ENCODE measurements at regions of chr18 and their contacts with region 1.

Region 1: DNA sequence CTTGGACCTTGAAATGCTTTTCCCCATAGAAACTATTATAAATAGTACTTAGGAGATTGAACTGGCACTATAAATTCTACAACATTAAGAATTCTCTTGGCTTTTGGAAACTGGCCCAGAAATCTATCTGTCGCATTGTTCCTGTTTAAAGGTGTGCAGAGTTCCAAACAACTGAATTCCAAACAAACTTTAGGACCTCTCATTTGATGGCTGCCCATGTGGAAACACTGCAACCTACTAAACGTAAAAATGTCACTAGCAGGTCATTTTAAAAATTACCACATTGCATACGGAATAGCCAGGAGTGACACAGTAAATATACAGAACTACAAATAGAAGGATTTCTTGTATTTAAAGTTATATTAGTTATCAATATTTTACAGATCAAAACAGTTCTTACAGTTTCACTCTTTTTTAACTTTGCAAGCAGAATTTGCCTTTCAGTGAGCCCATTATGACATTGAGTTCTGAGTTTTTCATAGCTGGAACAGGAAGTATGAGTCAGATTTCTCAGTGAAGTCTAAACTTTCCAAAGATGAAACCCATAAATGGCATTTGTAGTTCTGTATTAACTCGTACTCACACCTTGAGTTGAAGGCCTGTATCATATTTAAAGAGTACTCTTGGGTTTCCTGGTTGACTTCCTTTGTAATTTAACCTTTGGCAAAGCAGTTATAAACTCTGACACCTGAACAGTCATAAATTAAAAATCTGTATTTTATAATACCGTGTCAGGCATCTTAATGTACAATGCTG is 142.3 kb upstream of the BOD1L2 start:
- DNase-seq: no peak
- H3K4me3 Mint-ChIP-seq: no peak overlapping the region
- H3K27ac Mint-ChIP-seq: peak overlapping the region; percentile 57
- H3K4me1 Mint-ChIP-seq: peaks cover 46% of the 10 kb centered on the region
- H3K27me3 Mint-ChIP-seq: no peaks in the 10 kb centered on the region

Region 2: DNA sequence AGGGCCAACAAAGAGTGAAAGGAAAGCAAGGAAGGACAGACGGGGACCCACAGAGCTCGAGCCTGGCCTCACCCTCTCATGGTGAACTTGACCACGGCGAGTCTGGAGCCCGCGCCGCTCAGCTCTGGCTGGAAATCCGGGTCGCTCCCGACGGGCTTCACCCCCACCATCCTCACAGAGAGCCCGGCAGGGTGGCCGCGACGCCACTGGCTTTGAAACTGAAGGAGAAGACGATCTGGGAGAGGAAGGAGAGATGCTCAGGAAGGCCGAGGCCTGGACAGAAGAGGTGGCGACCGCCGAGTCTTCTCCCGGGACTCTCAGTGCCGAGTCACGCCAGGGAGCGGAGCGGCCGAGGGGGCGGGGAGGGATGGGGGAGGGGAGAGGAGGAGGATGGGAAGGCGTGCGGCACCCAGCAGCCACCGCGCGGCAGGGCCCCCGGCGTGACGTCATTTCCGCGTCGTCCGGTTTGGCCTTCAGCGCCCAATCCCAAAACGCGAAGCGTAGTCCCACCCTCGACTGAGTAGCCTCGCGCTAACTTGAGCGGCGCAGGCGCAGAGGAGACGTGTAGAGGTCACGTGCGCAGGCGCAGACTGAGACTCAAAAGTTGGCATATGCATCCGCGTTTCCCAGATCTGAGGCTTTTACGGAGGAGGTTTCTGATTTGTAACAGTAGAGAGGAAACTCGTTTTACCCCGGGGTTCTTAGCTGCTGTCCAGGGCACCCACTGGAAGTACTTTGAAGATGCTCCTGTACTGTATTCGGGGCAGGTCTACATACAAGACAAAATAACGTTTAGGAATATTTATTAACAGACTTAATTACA is 366.1 kb before region 1 on chr18 and contains the start of gene TXNL1:
- intact Hi-C with region 1: loop called (anchors 5 kb)
- DNase-seq: peak; percentile 98
- H3K4me3 Mint-ChIP-seq: peak within 1 kb of the TSS; percentile 99
- H3K27ac Mint-ChIP-seq: peak within 1 kb of the TSS; percentile 97
- H3K4me1 Mint-ChIP-seq: peaks cover 55% of the 10 kb centered on the region
- H3K27me3 Mint-ChIP-seq: no peaks in the 10 kb centered on the region
- total RNA-seq, gene TXNL1: 94.2 and 100 TPM in 2 replicates

Region 3: DNA sequence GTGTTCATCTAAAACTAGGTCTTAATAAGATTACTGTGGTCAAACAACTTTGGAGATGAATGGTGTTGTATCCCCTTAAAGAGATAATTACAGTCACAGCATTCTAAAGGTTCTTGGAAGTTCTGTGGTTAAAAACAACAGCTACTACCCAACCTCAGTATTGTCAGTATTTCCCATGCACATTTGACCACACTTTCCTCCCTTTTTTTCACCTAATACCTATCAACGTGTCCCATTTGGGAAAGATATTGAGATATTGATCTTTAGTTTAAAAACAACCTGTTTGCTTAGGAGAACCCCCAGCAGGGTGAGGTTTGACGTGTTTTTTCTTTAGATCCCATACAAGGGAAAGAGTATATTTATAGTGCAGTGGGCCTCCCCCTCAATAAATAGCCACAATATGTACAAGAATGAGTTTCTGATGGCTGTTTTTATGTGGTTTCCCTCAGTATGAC is 287.8 kb before region 1 on chr18:
- intact Hi-C with region 1: loop called (anchors 5 kb)
- DNase-seq: no peak
- H3K4me3 Mint-ChIP-seq: no peak overlapping the region
- H3K27ac Mint-ChIP-seq: peak overlapping the region; percentile 66
- H3K4me1 Mint-ChIP-seq: peaks cover 35% of the 10 kb centered on the region
- H3K27me3 Mint-ChIP-seq: no peaks in the 10 kb centered on the region

Region 4: GRCh38 chr18:56929886-56930285 is 74.7 kb before region 1 on chr18:
- intact Hi-C with region 1: loop called (anchors 5 kb)
- DNase-seq: no peak
- H3K4me3 Mint-ChIP-seq: no peak overlapping the region
- H3K27ac Mint-ChIP-seq: no peak overlapping the region
- H3K4me1 Mint-ChIP-seq: peaks cover 5% of the 10 kb centered on the region
- H3K27me3 Mint-ChIP-seq: no peaks in the 10 kb centered on the region

Region 5: GRCh38 chr18:56992777-56993176 is 11.8 kb before region 1 on chr18:
- intact Hi-C with region 1: loop called (anchors 1 kb)
- DNase-seq: no peak
- H3K4me3 Mint-ChIP-seq: no peak overlapping the region
- H3K27ac Mint-ChIP-seq: no peak overlapping the region
- H3K4me1 Mint-ChIP-seq: peaks cover 12% of the 10 kb centered on the region
- H3K27me3 Mint-ChIP-seq: no peaks in the 10 kb centered on the region

Region 6: GRCh38 chr18:57015451-57015850 is 10.9 kb after region 1 on chr18:
- intact Hi-C with region 1: loop called (anchors 1 kb)
- DNase-seq: no peak
- H3K4me3 Mint-ChIP-seq: no peak overlapping the region
- H3K27ac Mint-ChIP-seq: no peak overlapping the region
- H3K4me1 Mint-ChIP-seq: peaks cover 19% of the 10 kb centered on the region
- H3K27me3 Mint-ChIP-seq: no peaks in the 10 kb centered on the region